T-cell (primary cell): ENCODE measurements at regions of chr1 and their contacts with region 1.

Region 1: DNA sequence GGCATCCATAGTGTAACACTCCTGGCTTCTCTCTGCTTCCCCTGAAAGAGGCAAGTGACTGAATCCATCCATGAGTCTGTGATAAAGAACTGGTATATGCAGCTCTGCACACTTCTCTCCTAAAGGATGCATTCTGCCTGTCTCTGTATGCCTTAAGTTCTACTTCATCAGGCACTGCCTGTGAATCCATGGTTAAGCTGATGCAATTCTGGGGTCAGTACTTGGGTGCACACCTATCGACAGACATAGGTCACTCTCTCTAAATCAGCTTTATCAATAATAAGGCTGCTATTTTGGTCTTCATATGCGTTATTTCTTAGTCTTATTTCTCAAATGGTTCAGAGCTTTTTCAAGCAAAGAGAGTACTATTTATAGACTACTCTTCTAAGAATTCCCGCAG is 32.7 kb upstream of the PTP4A2 start:
- DNase-seq: no peak
- ATAC-seq: no peak
- H3K4me3 ChIP-seq: no peak overlapping the region
- H3K4me3 Mint-ChIP-seq: no peak overlapping the region
- H3K27ac ChIP-seq: no peak overlapping the region
- H3K27ac Mint-ChIP-seq: no peak overlapping the region
- H3K4me1 ChIP-seq: no peaks in the 10 kb centered on the region
- H3K4me1 Mint-ChIP-seq: no peaks in the 10 kb centered on the region
- H3K27me3 ChIP-seq: no peaks in the 10 kb centered on the region
- H3K27me3 Mint-ChIP-seq: no peaks in the 10 kb centered on the region

Region 2: DNA sequence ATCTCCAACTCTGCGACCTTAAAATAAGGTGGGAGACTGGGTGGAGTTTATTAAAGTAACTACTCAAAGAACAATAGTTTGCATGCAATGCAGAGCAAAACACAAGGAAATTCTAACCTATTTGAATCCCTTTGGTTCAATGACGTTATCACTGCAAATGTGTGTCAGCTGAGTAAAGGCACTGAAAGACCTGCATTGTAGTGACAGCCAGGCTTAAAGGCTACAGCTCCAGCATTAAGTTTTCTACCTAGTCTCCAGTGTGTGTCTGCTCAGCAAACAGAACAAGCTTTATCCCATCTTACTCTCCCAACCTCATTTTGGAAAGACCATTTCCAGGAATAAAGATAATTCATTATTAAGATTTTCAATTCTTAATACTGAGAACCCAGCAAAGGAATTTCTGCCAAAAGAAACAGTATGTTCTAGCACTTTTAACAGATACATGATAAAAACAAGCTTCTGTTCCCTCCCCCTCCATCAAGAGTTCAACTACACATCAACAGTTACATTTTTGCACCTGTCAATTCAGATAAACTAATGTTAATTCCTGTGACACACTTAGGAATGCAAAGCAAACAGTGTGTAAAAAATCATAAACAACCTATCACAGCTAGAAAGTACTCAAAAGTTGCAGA is 46.9 kb before region 1 on chr1:
- CTCF ChIA-PET with region 1: interaction called in 1 of 2 experiments, 6 read pairs
- POLR2A ChIA-PET with region 1: interaction called, 3 to 10 read pairs
- DNase-seq: peak in 1 of 35 experiments; percentile 60
- ATAC-seq: peak in 1 of 4 experiments; percentile 49
- H3K4me3 ChIP-seq: no peak overlapping the region
- H3K4me3 Mint-ChIP-seq: peak overlapping the region; percentile 46 to 89 (median 66)
- H3K27ac ChIP-seq: peak overlapping the region; percentile 59
- H3K27ac Mint-ChIP-seq: peak overlapping the region; percentile 75 to 78
- H3K4me1 ChIP-seq: peaks cover 55 to 60% of the 10 kb centered on the region in 2 experiments
- H3K4me1 Mint-ChIP-seq: peaks cover 81 to 88% (median 81%) of the 10 kb centered on the region in 3 donors
- H3K27me3 ChIP-seq: no peaks in the 10 kb centered on the region
- H3K27me3 Mint-ChIP-seq: no peaks in the 10 kb centered on the region

Region 3: GRCh38 chr1:31987135-31987619 is 16.3 kb after region 1 on chr1:
- CTCF ChIA-PET with region 1: interaction called in 1 of 2 experiments, 3 read pairs
- POLR2A ChIA-PET with region 1: interaction called in 1 of 2 experiments, 18 read pairs
- DNase-seq: no peak
- ATAC-seq: no peak
- H3K4me3 ChIP-seq: no peak overlapping the region
- H3K4me3 Mint-ChIP-seq: no peak overlapping the region
- H3K27ac ChIP-seq: no peak overlapping the region
- H3K27ac Mint-ChIP-seq: peak overlapping the region; percentile 43 to 83
- H3K4me1 ChIP-seq: peaks cover 30 to 44% of the 10 kb centered on the region in 2 experiments
- H3K4me1 Mint-ChIP-seq: peaks cover 46 to 59% (median 52%) of the 10 kb centered on the region in 3 donors
- H3K27me3 ChIP-seq: no peaks in the 10 kb centered on the region
- H3K27me3 Mint-ChIP-seq: no peaks in the 10 kb centered on the region